Activated B cell treated with CpG ODN at 0.5 μM for 24 hours (primary cell): ENCODE measurements at regions of chr1 and their contacts with region 1.

Region 1: DNA sequence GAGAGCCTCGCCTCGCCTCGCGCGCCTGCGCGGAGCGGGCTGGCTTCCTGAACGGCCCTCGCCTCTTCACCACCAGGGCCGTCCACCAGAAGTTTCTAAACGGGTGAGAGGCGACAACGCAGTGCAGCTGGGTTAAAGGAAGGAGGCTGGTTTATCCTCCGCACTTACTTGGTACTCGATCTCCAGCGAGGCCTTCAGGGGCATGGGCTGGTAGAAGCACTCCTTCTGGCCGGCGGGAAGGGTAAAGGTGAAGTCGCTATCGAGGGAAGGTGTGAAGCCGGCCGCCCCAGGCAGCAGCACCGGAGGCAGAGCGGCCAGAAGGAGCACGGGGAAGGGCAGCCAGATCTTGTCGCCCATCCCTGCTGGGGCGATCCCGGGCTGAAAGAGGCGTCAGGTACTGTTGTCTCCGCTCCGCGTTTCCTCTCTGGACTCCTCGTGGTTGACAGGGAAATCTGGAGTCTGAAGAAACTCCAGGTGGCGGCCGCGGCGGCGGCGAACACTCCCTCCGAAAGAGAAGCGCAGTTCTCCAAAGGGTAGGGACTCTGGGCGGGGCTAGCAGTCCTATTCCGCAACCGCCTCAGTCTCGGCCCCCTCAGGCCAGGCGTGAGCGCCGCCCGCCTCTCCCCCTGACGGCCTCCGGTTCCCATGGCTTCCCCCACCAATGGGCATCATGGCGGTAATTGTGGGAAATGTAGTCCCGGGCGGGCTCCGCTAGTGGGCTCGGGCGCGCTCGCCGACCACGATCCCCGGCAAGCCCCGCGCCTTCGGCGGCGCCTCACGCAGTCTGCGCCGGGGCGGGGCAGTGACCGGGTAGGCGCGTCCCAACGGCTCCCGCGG is at the start of gene TMED5:
- DNase-seq: peak; percentile 93
- ATAC-seq: peak; percentile 84
- H3K4me3 Mint-ChIP-seq: peak within 1 kb of the TSS; percentile 94
- H3K27ac Mint-ChIP-seq: peak within 1 kb of the TSS; percentile 96
- H3K4me1 Mint-ChIP-seq: peaks cover 51% of the 10 kb centered on the region
- H3K27me3 Mint-ChIP-seq: no peaks in the 10 kb centered on the region
- CTCF ChIP-seq: no peak
- total RNA-seq, gene TMED5: 38.7 and 42.3 TPM in 2 replicates

Region 2: GRCh38 chr1:92536980-92537884 is 642.9 kb before region 1 on chr1:
- CTCF ChIA-PET with region 1: no interaction called
- POLR2A ChIA-PET with region 1: no interaction called
- intact Hi-C with region 1: loop called (anchors 10 kb)
- DNase-seq: no peak
- ATAC-seq: peak; percentile 75
- H3K4me3 Mint-ChIP-seq: peak overlapping the region; percentile 59
- H3K27ac Mint-ChIP-seq: peak overlapping the region; percentile 65
- H3K4me1 Mint-ChIP-seq: peaks cover 45% of the 10 kb centered on the region
- H3K27me3 Mint-ChIP-seq: no peaks in the 10 kb centered on the region
- CTCF ChIP-seq: no peak

Region 3: DNA sequence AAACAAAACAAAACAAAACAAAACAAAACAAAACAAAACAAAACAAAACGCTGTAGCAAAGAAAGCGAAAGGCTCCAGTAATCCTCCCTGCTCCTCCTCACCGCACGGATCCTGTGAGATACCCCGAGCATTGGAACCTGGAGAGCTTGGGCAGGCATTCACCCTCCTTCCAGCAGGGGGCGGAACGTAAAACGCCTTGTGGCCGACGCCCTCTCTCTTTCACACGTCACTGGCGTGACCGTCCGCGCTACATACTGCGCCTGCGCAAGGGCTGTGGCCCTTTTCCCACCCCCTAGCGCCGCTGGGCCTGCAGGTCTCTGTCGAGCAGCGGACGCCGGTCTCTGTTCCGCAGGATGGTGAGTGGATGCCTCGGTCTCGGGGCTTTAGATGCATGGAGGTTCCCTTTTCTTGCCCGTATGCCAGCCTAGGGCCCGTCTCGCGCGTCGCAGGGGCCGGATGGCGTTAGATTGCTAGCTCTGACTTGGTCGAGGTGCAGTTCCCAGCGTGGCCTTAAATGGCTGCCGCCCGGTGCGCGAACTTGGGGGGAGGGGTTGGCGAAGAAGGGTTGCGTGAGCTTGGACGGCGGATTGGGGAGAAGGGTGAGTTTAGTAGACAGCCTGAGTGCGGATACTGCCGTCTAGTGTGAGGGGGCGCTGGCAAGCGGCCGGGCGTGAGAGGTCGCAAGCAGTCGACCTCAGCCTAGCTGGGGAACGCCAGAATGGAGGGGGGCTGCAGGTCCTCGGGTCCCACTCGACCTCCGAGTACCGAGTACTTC is 348.2 kb before region 1 on chr1 and contains the start of gene RPL5:
- CTCF ChIA-PET with region 1: no interaction called
- POLR2A ChIA-PET with region 1: no interaction called
- intact Hi-C with region 1: loop called (anchors 1 kb)
- DNase-seq: peak; percentile 98
- ATAC-seq: peak; percentile 90
- H3K4me3 Mint-ChIP-seq: peak within 1 kb of the TSS; percentile 99
- H3K27ac Mint-ChIP-seq: peak within 1 kb of the TSS; percentile 97
- H3K4me1 Mint-ChIP-seq: peaks cover 48% of the 10 kb centered on the region
- H3K27me3 Mint-ChIP-seq: no peaks in the 10 kb centered on the region
- CTCF ChIP-seq: no peak
- total RNA-seq, gene RPL5: 1,685 and 1,766 TPM in 2 replicates

Region 4: GRCh38 chr1:93164816-93165215 is 15.3 kb before region 1 on chr1:
- CTCF ChIA-PET with region 1: no interaction called
- POLR2A ChIA-PET with region 1: interaction called, 6 read pairs
- intact Hi-C with region 1: loop called (anchors 2 kb)
- DNase-seq: no peak
- ATAC-seq: no peak
- H3K4me3 Mint-ChIP-seq: no peak overlapping the region
- H3K27ac Mint-ChIP-seq: no peak overlapping the region
- H3K4me1 Mint-ChIP-seq: peaks cover 42% of the 10 kb centered on the region
- H3K27me3 Mint-ChIP-seq: no peaks in the 10 kb centered on the region
- CTCF ChIP-seq: no peak

Region 5: GRCh38 chr1:93607814-93608186 is 427.7 kb after region 1 on chr1:
- CTCF ChIA-PET with region 1: no interaction called
- POLR2A ChIA-PET with region 1: no interaction called
- intact Hi-C with region 1: loop called (anchors 2 kb)
- DNase-seq: no peak
- ATAC-seq: peak; percentile 91
- H3K4me3 Mint-ChIP-seq: peak overlapping the region; percentile 62
- H3K27ac Mint-ChIP-seq: peak overlapping the region; percentile 87
- H3K4me1 Mint-ChIP-seq: peaks cover 69% of the 10 kb centered on the region
- H3K27me3 Mint-ChIP-seq: no peaks in the 10 kb centered on the region
- CTCF ChIP-seq: no peak

Region 6: DNA sequence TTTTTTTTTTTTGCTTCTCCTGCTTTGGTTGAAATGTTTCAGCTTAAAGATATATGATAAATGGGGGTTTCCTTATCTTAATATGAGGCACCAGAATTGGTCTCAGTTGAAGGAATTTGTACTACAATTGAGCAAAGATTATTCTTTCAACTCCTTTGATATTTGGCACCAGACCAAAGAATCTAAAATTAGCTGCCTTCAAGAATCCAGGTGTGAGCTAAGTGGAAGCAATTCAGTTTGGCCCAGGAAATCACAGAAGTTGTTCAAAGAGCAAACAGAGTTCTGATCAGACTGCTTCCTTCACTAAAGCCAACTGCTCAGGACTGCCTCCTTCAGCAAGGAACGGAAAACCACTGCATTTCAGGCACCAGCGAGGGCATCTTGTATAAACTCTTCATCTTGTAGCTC is 569.8 kb after region 1 on chr1:
- CTCF ChIA-PET with region 1: no interaction called
- POLR2A ChIA-PET with region 1: no interaction called
- intact Hi-C with region 1: loop called (anchors 1 kb)
- DNase-seq: no peak
- ATAC-seq: peak; percentile 62
- H3K4me3 Mint-ChIP-seq: peak overlapping the region; percentile 76
- H3K27ac Mint-ChIP-seq: peak overlapping the region; percentile 94
- H3K4me1 Mint-ChIP-seq: peaks cover 60% of the 10 kb centered on the region
- H3K27me3 Mint-ChIP-seq: no peaks in the 10 kb centered on the region
- CTCF ChIP-seq: no peak